B cell (primary cell): ENCODE measurements at regions of chr5 and their contacts with region 1.

Region 1: DNA sequence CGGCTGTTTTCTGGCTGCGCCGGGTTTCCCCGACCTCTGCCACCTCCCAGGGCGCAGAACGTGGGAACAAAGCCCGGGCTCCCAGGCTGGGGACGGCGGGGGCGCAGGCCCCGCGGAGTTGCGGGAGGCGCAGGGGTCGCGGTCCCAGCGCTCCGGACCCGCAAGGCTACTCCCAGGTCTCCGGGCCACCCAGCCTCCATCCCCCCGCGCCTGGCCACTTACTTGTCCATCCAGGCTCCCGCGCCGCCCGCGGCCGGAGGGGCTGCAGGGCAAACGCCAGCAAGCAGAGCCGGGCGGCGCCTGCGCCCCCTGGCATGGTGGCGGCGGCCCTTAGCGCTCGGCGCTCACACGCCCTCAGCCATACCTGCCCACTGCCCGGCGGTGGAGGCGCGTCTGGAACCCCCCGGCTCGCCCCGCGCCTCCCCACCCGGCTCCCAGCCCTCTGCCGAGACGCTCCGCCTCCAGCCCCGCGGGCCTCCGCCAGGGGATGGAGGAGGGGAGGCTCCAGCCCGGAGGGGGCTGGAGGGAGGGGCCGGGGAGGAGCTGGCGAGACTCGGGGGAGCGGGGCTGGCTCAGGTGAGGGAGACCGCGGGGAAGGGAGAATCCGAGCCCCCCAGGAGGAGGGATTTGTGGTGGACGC is at the start of gene ADAM19:
- DNase-seq: peak; percentile 67
- ATAC-seq: peak; percentile 47
- H3K4me3 ChIP-seq: peak within 1 kb of the TSS; percentile 94 to 99 (median 99)
- H3K4me3 Mint-ChIP-seq: peak within 1 kb of the TSS; percentile 96
- H3K27ac ChIP-seq: peak within 1 kb of the TSS; percentile 79 to 84
- H3K27ac Mint-ChIP-seq: peak within 1 kb of the TSS; percentile 95
- H3K4me1 ChIP-seq: peaks cover 44 to 65% of the 10 kb centered on the region in 2 donors
- H3K4me1 Mint-ChIP-seq: peaks cover 70% of the 10 kb centered on the region
- H3K27me3 ChIP-seq: no peaks in the 10 kb centered on the region
- H3K27me3 Mint-ChIP-seq: no peaks in the 10 kb centered on the region
- CTCF ChIP-seq: peak; percentile 18
- total RNA-seq, gene ADAM19: 171 TPM in 2 replicates

Region 2: GRCh38 chr5:157431544-157432200 is 143.8 kb before region 1 on chr5:
- CTCF ChIA-PET with region 1: interaction called, 6 read pairs
- POLR2A ChIA-PET with region 1: interaction called, 3 read pairs
- intact Hi-C with region 1: loop called (anchors 10 kb)
- DNase-seq: peak; percentile 84
- ATAC-seq: peak; percentile 100
- H3K4me3 ChIP-seq: peak overlapping the region in 1 of 5 experiments; percentile 30
- H3K4me3 Mint-ChIP-seq: peak overlapping the region; percentile 40
- H3K27ac ChIP-seq: peak overlapping the region; percentile 28 to 67
- H3K27ac Mint-ChIP-seq: peak overlapping the region; percentile 88
- H3K4me1 ChIP-seq: peaks cover 8 to 11% of the 10 kb centered on the region in 2 donors
- H3K4me1 Mint-ChIP-seq: peaks cover 18% of the 10 kb centered on the region
- H3K27me3 ChIP-seq: no peaks in the 10 kb centered on the region
- H3K27me3 Mint-ChIP-seq: no peaks in the 10 kb centered on the region
- CTCF ChIP-seq: peak; percentile 76

Region 3: GRCh38 chr5:157502143-157502647 is 73.3 kb before region 1 on chr5:
- CTCF ChIA-PET with region 1: interaction called, 4 read pairs
- POLR2A ChIA-PET with region 1: no interaction called
- intact Hi-C with region 1: loop called (anchors 1 kb)
- DNase-seq: peak; percentile 87
- ATAC-seq: peak; percentile 76
- H3K4me3 ChIP-seq: no peak overlapping the region
- H3K4me3 Mint-ChIP-seq: peak overlapping the region; percentile 16
- H3K27ac ChIP-seq: peak overlapping the region; percentile 83 to 98
- H3K27ac Mint-ChIP-seq: peak overlapping the region; percentile 95
- H3K4me1 ChIP-seq: peaks cover 84 to 91% of the 10 kb centered on the region in 2 donors
- H3K4me1 Mint-ChIP-seq: peaks cover 87% of the 10 kb centered on the region
- H3K27me3 ChIP-seq: no peaks in the 10 kb centered on the region
- H3K27me3 Mint-ChIP-seq: no peaks in the 10 kb centered on the region
- CTCF ChIP-seq: no peak

Region 4: GRCh38 chr5:157596487-157596886 is 21.0 kb after region 1 on chr5:
- CTCF ChIA-PET with region 1: interaction called, 67 read pairs
- POLR2A ChIA-PET with region 1: interaction called, 30 read pairs
- intact Hi-C with region 1: loop called (anchors 1 kb)
- DNase-seq: peak; percentile 87
- ATAC-seq: peak; percentile 73
- H3K4me3 ChIP-seq: peak overlapping the region in 1 of 5 experiments; percentile 31
- H3K4me3 Mint-ChIP-seq: peak overlapping the region; percentile 45
- H3K27ac ChIP-seq: peak overlapping the region; percentile 92 to 97
- H3K27ac Mint-ChIP-seq: peak overlapping the region; percentile 85
- H3K4me1 ChIP-seq: peaks cover 92 to 95% of the 10 kb centered on the region in 2 donors
- H3K4me1 Mint-ChIP-seq: peaks cover 93% of the 10 kb centered on the region
- H3K27me3 ChIP-seq: no peaks in the 10 kb centered on the region
- H3K27me3 Mint-ChIP-seq: no peaks in the 10 kb centered on the region
- CTCF ChIP-seq: no peak

Region 5: DNA sequence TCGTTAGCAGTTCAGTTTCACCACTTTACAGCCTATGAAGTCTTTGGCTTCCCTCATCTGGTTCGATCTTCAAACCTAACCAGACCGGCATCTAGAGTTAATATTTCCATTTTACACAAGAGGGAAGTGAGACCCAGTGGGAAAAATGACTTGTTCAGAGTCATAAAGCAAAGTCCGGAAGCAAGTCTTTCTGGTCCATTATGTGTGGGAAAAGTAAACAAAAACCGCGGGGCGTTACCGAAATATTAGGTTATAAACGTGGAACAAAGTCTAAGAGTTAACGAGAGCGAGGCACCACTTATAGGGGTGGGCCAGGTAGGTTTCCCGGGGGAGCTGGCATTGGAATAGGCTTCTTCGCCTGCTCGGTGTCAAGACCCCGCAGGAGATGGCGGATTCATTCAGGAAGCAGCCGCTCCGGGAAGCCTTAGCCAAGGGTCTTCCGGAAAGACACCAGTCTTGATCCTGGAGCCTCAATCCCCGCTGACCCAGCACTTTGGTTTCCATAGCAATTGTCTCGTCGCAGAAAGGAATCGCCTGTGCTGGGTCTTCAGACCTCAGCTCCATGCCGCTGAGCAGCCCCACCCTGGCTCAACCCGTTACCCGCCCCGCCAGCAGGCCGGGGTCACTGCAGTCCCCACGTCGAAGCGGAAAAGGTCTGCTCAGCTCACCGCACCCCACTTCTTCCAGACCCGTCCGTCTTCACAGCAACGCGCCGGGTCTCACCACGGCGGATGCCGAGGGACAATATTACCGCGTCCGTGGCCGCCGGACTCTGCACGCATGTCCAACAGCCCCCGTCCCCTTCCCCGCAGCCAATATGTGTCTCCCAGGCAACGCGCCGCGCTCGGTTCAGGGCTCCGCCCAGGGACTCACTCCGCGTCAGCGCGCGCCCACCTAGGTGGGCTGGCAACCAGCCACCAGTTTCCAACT is 95.4 kb after region 1 on chr5 and contains the start of gene C5orf52:
- CTCF ChIA-PET with region 1: interaction called, 8 read pairs
- POLR2A ChIA-PET with region 1: no interaction called
- intact Hi-C with region 1: loop called (anchors 5 kb)
- DNase-seq: peak; percentile 49
- ATAC-seq: peak; percentile 51
- H3K4me3 ChIP-seq: peak within 1 kb of the TSS; percentile 52 to 76 (median 72)
- H3K4me3 Mint-ChIP-seq: peak within 1 kb of the TSS; percentile 98
- H3K27ac ChIP-seq: peak within 1 kb of the TSS in 1 of 2 donors; percentile 17
- H3K27ac Mint-ChIP-seq: peak within 1 kb of the TSS; percentile 83
- H3K4me1 ChIP-seq: peaks cover 13 to 29% of the 10 kb centered on the region in 2 donors
- H3K4me1 Mint-ChIP-seq: peaks cover 29% of the 10 kb centered on the region
- H3K27me3 ChIP-seq: no peaks in the 10 kb centered on the region
- H3K27me3 Mint-ChIP-seq: no peaks in the 10 kb centered on the region
- CTCF ChIP-seq: no peak
- total RNA-seq, gene C5orf52: not detected in 2 replicates